H1 (cell line): ENCODE measurements at regions of chr7 and their contacts with region 1.

Region 1: DNA sequence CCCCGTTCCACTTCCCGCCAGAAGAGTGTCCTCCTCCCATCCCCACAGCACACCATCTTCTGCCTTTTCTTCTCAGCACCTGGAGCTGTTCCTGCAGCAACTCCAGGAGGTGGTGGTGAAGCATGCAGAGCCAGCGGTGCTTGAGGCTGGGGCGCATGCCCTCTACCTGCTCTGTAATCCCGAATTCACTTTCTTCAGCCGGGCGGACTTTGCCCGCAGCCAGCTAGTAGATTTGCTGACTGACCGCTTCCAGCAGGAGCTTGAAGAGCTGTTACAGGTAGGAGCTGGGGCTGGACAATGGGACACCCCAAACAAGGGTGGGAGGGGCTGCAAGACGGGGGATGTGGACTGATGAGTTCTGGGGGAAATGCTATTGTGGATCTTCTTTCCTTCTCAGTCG is 19.1 kb upstream of the PVRIG start:
- DNase-seq: no peak
- H3K4me3 ChIP-seq: no peak overlapping the region
- H3K27ac ChIP-seq: no peak overlapping the region
- H3K4me1 ChIP-seq: peaks cover 0 to 9% (median 3%) of the 10 kb centered on the region in 4 experiments; a peak in 3 of 7 replicates
- H3K27me3 ChIP-seq: peaks cover 0 to 4% (median 1%) of the 10 kb centered on the region in 4 experiments; a peak in 4 of 7 replicates
- CTCF ChIP-seq: no peak
- EP300 ChIP-seq: no peak
- POLR2A ChIP-seq: no peak
- RAD21 ChIP-seq: no peak

Region 2: DNA sequence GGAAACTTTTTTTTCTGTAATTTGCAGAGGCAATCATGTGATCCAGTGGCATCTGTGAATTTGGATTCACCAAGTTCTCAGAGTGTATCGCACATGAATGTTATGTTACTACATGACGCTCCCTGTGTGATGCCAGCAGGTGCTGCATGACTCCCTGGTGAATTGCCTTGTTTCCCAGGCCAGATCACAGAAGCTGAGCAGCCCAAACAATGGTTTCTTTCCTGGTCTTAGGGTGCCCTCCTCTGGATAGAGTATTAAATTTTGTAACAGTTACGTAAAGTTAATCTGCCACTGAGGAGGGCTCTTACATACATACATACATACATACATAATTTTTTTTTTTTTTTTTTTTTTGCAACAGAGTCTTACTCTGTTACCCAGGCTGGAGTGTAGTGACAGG is 147.5 kb before region 1 on chr7:
- CTCF ChIA-PET with region 1: no interaction called
- POLR2A ChIA-PET with region 1: no interaction called
- DNase-seq: no peak
- H3K4me3 ChIP-seq: no peak overlapping the region
- H3K27ac ChIP-seq: no peak overlapping the region
- H3K4me1 ChIP-seq: peaks cover 0 to 3% (median 0%) of the 10 kb centered on the region in 4 experiments; a peak in 3 of 7 replicates
- H3K27me3 ChIP-seq: peaks cover 0 to 1% (median 0%) of the 10 kb centered on the region in 4 experiments; a peak in 1 of 7 replicates
- CTCF ChIP-seq: peak in 2 of 3 experiments; percentile 23 to 42; a peak in 2 of 4 replicates
- EP300 ChIP-seq: no peak
- POLR2A ChIP-seq: no peak
- RAD21 ChIP-seq: peak; percentile 61 to 65

Region 3: GRCh38 chr7:100190048-100190711 is 10.5 kb before region 1 on chr7:
- CTCF ChIA-PET with region 1: interaction called, 17 read pairs
- POLR2A ChIA-PET with region 1: interaction called, 4 read pairs
- DNase-seq: no peak
- H3K4me3 ChIP-seq: no peak overlapping the region
- H3K27ac ChIP-seq: no peak overlapping the region
- H3K4me1 ChIP-seq: no peaks in the 10 kb centered on the region
- H3K27me3 ChIP-seq: no peaks in the 10 kb centered on the region; a peak in 1 of 7 replicates
- CTCF ChIP-seq: peak in 1 of 3 experiments; percentile 15; a peak in 2 of 4 replicates
- EP300 ChIP-seq: no peak
- POLR2A ChIP-seq: no peak
- RAD21 ChIP-seq: peak; percentile 7; a peak in 1 of 4 replicates